ENCODE measurements at regions of chr11 and their contacts with region 1.

Region 1: GRCh38 chr11:95296621-95297025 is 65.6 kb upstream of the SESN3 start:
- DNase-seq: no peak
- ATAC-seq: peak; percentile 78
- H3K4me3 ChIP-seq: no peak overlapping the region
- H3K4me3 Mint-ChIP-seq: peak overlapping the region in 1 of 10 donors; percentile 5
- H3K27ac ChIP-seq: no peak overlapping the region
- H3K27ac Mint-ChIP-seq: no peak overlapping the region
- H3K4me1 ChIP-seq: peaks cover 0 to 27% of the 10 kb centered on the region in 2 donors
- H3K4me1 Mint-ChIP-seq: peaks cover 26 to 47% (median 32%) of the 10 kb centered on the region in 7 donors
- H3K27me3 ChIP-seq: no peaks in the 10 kb centered on the region
- H3K27me3 Mint-ChIP-seq: peaks cover 0 to 4% (median 0%) of the 10 kb centered on the region in 5 donors

Region 2: DNA sequence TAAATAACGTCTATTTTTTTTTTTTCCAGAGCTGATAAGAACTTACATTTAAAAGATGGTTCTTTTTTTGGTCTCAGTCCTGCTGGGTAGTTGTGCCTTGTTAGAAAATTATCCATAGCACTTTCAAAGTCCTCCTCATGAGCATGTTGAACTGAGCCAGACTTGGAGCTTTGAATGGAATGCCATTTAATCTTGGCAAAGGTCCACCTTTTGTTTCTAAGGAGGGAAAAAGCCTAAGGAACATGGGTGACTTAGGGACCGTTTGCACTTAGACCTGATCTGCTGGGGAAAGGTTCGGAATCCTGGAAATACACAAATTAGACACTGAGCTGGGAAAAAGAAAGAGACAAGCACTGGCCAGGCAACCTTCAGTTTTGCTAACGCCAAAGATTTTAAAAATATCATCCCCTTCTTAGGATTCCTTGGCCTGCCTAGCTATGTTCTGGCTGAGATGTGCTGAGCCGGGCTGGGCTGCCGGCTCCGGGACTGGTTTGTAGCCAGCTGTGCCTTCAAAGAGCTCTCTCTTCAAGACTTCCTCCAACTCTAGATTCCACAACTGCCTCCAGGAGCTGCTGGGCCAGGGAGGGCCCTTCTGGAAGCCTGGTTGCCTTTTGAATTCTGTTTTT is 139.6 kb before region 1 on chr11:
- CTCF ChIA-PET with region 1: no interaction called
- POLR2A ChIA-PET with region 1: interaction called, 3 read pairs
- intact Hi-C with region 1: loop called in 1 of 2 experiments (anchors 5 kb)
- DNase-seq: no peak
- ATAC-seq: no peak
- H3K4me3 ChIP-seq: no peak overlapping the region
- H3K4me3 Mint-ChIP-seq: peak overlapping the region in 1 of 10 donors; percentile 42
- H3K27ac ChIP-seq: no peak overlapping the region
- H3K27ac Mint-ChIP-seq: peak overlapping the region in 7 of 9 donors; percentile 10 to 84 (median 44)
- H3K4me1 ChIP-seq: peaks cover 17 to 24% of the 10 kb centered on the region in 2 donors
- H3K4me1 Mint-ChIP-seq: peaks cover 26 to 55% (median 48%) of the 10 kb centered on the region in 7 donors
- H3K27me3 ChIP-seq: no peaks in the 10 kb centered on the region
- H3K27me3 Mint-ChIP-seq: no peaks in the 10 kb centered on the region

Region 3: GRCh38 chr11:95254131-95254704 is 42.4 kb before region 1 on chr11:
- CTCF ChIA-PET with region 1: no interaction called
- POLR2A ChIA-PET with region 1: interaction called, 3 read pairs
- intact Hi-C with region 1: loop called in 1 of 2 experiments (anchors 2 kb)
- DNase-seq: peak; percentile 45 to 91 (median 84)
- ATAC-seq: peak; percentile 98
- H3K4me3 ChIP-seq: peak overlapping the region; percentile 52
- H3K4me3 Mint-ChIP-seq: peak overlapping the region; percentile 74 to 98 (median 89)
- H3K27ac ChIP-seq: peak overlapping the region; percentile 71
- H3K27ac Mint-ChIP-seq: peak overlapping the region; percentile 81 to 98 (median 90)
- H3K4me1 ChIP-seq: peaks cover 13 to 31% of the 10 kb centered on the region in 2 donors
- H3K4me1 Mint-ChIP-seq: peaks cover 20 to 59% (median 53%) of the 10 kb centered on the region in 7 donors
- H3K27me3 ChIP-seq: no peaks in the 10 kb centered on the region
- H3K27me3 Mint-ChIP-seq: no peaks in the 10 kb centered on the region

Region 4: GRCh38 chr11:97118614-97119200 is 1822.1 kb after region 1 on chr11:
- CTCF ChIA-PET with region 1: no interaction called
- POLR2A ChIA-PET with region 1: no interaction called
- intact Hi-C with region 1: no loop called
- DNase-seq: no peak
- ATAC-seq: no peak
- H3K4me3 ChIP-seq: no peak overlapping the region
- H3K4me3 Mint-ChIP-seq: no peak overlapping the region
- H3K27ac ChIP-seq: no peak overlapping the region
- H3K27ac Mint-ChIP-seq: no peak overlapping the region
- H3K4me1 ChIP-seq: no peaks in the 10 kb centered on the region
- H3K4me1 Mint-ChIP-seq: no peaks in the 10 kb centered on the region
- H3K27me3 ChIP-seq: no peaks in the 10 kb centered on the region
- H3K27me3 Mint-ChIP-seq: no peaks in the 10 kb centered on the region

Measured in naive thymus-derived CD4-positive, alpha-beta T cell (primary cell).